ENCODE measurements at regions of chr10 and their contacts with region 1.

Region 1: DNA sequence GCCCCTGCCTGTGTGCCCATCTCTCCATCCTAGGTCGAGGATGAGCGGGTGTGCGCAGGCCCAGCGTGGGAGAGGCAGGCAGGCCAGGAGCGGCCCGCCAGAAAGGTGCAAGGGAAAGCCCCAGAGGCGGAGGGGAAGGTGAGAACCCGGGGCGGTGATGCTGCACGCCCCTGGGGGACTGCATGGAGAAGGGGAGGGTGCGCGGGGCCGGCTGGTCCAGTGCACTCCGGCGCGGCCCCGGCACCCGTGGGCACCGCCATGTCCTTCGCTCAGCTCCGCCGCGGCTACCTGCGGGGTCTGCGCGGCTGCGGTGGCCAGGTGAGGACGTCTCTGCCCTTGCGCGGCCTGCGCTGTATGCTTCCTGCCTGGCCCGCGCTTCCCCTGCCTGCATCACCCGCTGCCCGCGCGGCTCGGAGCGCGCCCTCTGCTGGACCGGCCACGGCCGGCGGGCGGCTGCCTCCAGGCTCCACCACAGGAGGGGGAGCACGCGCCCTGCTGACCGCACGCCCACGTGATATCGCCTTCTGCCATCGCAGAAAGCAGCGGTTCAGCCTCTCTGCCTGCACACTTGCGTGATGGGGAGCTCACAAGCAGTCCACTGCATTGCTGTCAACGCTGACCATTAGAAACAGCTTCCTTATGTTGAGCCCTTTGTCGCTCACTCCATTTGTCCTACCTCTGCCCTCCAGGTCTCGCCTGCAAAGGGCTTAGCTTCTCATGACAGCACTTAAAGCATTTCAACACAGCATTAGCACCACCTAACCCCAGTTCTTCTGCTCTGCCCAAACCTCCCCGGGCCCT is 73.9 kb downstream of the CXCL12 start:
- DNase-seq: peak; percentile 83 to 88 (median 84)
- ATAC-seq: peak; percentile 98
- H3K4me3 ChIP-seq: no peak overlapping the region
- H3K4me1 ChIP-seq: no peaks in the 10 kb centered on the region
- CTCF ChIP-seq: peak; percentile 91

Region 2: GRCh38 chr10:43689955-43690771 is 620.8 kb before region 1 on chr10:
- intact Hi-C with region 1: loop called (anchors 10 kb)
- DNase-seq: peak; percentile 84 to 93 (median 90)
- ATAC-seq: peak; percentile 98
- H3K4me3 ChIP-seq: peak overlapping the region; percentile 14
- H3K4me1 ChIP-seq: peaks cover 3% of the 10 kb centered on the region
- CTCF ChIP-seq: peak; percentile 94

Region 3: DNA sequence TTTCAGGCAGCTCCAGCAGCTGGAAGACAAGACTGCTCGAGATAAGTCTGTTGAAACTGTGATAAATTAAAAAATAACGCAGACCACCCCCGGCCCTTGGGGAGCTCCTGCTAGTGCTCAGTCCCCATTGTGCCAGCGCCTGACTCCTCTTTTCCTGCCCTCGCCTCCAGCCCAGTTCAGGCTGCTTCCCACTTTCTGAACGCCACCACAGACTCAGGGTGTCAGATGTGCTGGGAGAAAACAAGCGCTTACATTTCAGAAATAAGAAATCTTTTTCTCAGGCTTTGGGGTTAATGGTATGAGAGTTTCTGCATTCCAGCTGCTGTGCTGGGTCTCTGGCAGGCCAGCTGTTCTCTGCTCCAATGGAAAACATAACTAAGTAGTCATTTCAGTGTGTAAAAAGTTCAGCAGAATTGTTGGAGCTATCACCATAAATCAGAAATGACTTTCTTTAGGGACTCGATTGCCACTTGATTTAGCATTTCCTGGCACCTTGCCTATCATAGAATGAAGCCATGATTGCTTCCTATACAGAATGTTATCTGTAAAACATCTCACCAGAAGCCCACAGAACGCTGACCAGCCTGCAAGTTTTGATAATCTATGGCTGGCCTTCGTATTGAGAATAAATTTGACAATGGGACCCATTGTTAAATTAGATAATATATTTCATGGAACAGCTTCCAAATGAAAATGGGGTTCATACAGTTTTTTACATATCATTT is 405.3 kb before region 1 on chr10:
- intact Hi-C with region 1: loop called in 1 of 2 experiments (anchors 10 kb)
- DNase-seq: no peak
- ATAC-seq: peak; percentile 10
- H3K4me3 ChIP-seq: no peak overlapping the region
- H3K4me1 ChIP-seq: no peaks in the 10 kb centered on the region
- CTCF ChIP-seq: no peak

Region 4: GRCh38 chr10:44398747-44399658 is 88.0 kb after region 1 on chr10:
- intact Hi-C with region 1: no loop called
- DNase-seq: no peak
- ATAC-seq: no peak
- H3K4me3 ChIP-seq: no peak overlapping the region
- H3K4me1 ChIP-seq: no peaks in the 10 kb centered on the region
- CTCF ChIP-seq: no peak

Measured in mucosa of descending colon (tissue), 3 donors.